ENCODE measurements at regions of chr10 and their contacts with region 1.

Region 1: DNA sequence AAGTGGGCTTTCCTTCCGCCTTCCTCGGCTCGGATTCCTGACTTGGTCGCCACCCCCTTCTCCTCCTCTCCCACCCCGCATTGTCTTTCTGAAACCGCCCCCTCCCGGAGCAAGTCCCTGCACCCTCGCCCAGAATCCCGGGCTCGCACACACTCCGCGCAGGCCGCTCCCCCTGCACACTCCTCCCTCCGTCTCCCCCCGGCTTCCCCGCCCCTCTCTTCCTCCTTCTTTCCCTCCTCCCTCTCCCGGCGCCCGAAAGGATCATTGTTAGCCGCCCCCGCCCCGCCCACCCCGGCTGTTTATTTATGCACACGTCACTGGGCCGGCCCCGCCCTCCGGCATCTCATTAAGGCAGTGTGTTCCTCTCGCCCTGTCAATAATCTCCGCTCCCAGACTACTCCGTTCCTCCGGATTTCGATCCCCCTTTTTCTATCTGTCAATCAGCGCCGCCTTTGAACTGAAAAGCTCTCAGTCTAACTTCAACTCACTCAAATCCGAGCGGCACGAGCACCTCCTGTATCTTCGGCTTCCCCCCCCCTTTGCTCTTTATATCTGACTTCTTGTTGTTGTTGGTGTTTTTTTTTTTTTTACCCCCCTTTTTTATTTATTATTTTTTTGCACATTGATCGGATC is at the start of gene TCF7L2:
- DNase-seq: peak; percentile 94 to 98
- ATAC-seq: peak; percentile 89 to 96 (median 95)
- H3K4me3 ChIP-seq: peak within 1 kb of the TSS; percentile 62 to 90 (median 80)
- H3K27ac ChIP-seq: peak within 1 kb of the TSS; percentile 84 to 97 (median 90)
- H3K4me1 ChIP-seq: peaks cover 4 to 44% (median 18%) of the 10 kb centered on the region in 9 donors
- H3K27me3 ChIP-seq: peaks cover 0 to 22% (median 0%) of the 10 kb centered on the region in 7 donors
- CTCF ChIP-seq: no peak
- total RNA-seq, gene TCF7L2: 9.9 to 15.8 (median 12.0) TPM

Region 2: GRCh38 chr10:112471878-112472487 is 478.0 kb before region 1 on chr10:
- intact Hi-C with region 1: loop called in 1 of 10 experiments (anchors 5 kb)
- DNase-seq: no peak
- ATAC-seq: peak in 6 of 8 donors; percentile 56 to 73 (median 61)
- H3K4me3 ChIP-seq: no peak overlapping the region
- H3K27ac ChIP-seq: no peak overlapping the region
- H3K4me1 ChIP-seq: peaks cover 0 to 8% (median 0%) of the 10 kb centered on the region in 9 donors
- H3K27me3 ChIP-seq: no peaks in the 10 kb centered on the region
- CTCF ChIP-seq: peak; percentile 55 to 81 (median 76)

Region 3: DNA sequence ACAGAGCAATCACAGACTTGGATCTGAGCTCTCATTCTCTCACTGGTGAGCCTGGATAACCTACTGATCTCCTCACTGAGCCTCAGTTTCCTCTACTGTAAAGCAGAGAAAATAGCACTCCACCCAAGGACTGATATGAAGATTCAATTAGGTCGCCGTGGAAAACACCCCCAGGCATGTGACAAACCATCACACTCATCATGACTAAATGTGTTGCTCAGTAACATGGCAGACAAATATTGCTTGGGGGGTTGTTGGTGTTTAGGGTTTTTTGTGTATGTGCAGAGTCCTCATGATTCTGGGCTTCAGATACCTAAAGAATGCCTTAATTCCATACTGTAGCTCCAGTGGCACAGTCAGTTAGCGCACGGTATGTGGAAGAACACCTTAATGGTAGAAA is 122.0 kb before region 1 on chr10:
- intact Hi-C with region 1: no loop called
- DNase-seq: no peak
- ATAC-seq: no peak
- H3K4me3 ChIP-seq: no peak overlapping the region
- H3K27ac ChIP-seq: no peak overlapping the region
- H3K4me1 ChIP-seq: no peaks in the 10 kb centered on the region
- H3K27me3 ChIP-seq: no peaks in the 10 kb centered on the region
- CTCF ChIP-seq: no peak

Region 4: DNA sequence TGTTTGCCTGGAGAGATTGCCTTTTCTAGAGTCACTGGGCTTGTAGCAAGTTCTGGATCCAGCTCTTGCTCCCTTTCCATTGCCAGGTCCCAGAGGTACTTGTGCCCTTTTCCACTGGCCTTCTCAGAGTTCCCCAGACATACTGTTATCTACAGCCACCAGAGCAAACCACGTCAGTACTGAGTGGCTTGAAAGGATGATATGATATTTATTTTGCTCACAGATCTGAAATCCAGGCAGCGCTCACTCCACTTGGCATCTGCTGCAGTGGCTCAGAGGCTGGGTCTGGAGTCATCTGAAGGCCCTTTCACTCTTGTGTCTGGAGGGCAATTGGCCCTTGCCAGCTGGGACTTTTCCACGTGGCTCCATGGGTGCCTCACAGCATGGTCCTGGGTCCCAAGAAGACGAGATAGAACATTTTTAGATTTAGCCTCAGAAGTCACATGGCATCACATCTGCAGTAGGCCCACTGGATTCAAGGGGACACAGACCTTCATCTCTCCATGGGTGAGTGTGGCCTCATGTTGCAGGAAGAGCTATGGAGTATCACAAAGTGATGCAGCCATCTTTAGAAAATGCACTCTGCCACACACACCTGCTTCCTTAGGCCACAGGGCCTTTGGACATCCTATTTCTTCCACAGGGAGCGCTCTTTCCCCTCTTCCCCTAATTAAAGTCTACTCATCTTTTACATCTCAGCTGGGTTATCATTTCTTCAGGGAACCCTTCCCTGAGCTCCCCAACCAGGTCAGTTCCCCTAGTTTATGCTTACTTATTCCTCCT is 22.9 kb before region 1 on chr10:
- intact Hi-C with region 1: no loop called
- DNase-seq: no peak
- ATAC-seq: peak in 4 of 8 donors; percentile 18 to 88 (median 76)
- H3K4me3 ChIP-seq: no peak overlapping the region
- H3K27ac ChIP-seq: no peak overlapping the region
- H3K4me1 ChIP-seq: no peaks in the 10 kb centered on the region
- H3K27me3 ChIP-seq: no peaks in the 10 kb centered on the region
- CTCF ChIP-seq: no peak

Region 5: GRCh38 chr10:112981553-112981952 is 31.6 kb after region 1 on chr10:
- intact Hi-C with region 1: no loop called
- DNase-seq: no peak
- ATAC-seq: no peak
- H3K4me3 ChIP-seq: no peak overlapping the region
- H3K27ac ChIP-seq: no peak overlapping the region
- H3K4me1 ChIP-seq: peaks cover 2 to 35% (median 23%) of the 10 kb centered on the region in 9 donors
- H3K27me3 ChIP-seq: no peaks in the 10 kb centered on the region
- CTCF ChIP-seq: no peak

Region 6: DNA sequence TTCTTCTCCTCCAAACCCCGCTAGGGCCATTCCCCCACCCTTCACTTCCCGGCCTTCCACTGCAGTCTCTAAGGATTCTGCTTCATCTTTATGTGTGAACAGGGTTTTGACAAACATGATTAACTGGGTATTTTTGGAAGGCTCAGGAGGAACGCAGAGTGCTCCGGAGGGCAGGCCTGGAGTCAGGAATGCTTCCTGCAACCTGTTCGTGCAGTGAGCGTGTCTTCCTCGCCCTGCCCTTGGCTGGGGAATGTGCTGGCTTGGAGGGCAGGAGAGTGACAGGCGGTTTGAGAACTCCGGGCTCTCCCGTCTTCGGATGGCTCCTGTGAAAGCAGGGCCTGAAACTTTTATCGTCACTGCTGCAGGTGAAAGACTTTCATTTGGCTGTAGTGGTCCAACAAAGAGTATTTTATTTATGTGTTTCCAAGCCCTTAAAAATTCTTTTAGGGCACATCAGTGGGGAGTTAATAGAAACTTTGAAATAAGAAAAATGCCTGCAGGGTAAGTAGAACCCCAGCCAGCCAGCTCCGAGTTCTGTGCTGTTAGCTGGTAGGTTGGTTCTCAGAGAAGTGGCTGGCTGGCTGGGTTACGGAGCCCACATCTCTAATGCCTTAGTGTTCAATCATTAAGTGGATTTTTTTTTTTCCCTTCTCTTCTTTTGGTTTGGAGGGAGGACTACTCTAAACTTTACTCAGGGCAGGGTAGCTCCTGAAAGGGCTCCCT is 51.0 kb after region 1 on chr10:
- intact Hi-C with region 1: loop called in 2 of 10 experiments (anchors 5 kb)
- DNase-seq: peak in 1 of 2 donors; percentile 35
- ATAC-seq: peak in 7 of 8 donors; percentile 62 to 89 (median 80)
- H3K4me3 ChIP-seq: no peak overlapping the region
- H3K27ac ChIP-seq: peak overlapping the region in 7 of 10 donors; percentile 8 to 58 (median 39)
- H3K4me1 ChIP-seq: peaks cover 9 to 81% (median 37%) of the 10 kb centered on the region in 9 donors
- H3K27me3 ChIP-seq: no peaks in the 10 kb centered on the region
- CTCF ChIP-seq: peak in 4 of 9 donors; percentile 18 to 33 (median 27)

Region 7: DNA sequence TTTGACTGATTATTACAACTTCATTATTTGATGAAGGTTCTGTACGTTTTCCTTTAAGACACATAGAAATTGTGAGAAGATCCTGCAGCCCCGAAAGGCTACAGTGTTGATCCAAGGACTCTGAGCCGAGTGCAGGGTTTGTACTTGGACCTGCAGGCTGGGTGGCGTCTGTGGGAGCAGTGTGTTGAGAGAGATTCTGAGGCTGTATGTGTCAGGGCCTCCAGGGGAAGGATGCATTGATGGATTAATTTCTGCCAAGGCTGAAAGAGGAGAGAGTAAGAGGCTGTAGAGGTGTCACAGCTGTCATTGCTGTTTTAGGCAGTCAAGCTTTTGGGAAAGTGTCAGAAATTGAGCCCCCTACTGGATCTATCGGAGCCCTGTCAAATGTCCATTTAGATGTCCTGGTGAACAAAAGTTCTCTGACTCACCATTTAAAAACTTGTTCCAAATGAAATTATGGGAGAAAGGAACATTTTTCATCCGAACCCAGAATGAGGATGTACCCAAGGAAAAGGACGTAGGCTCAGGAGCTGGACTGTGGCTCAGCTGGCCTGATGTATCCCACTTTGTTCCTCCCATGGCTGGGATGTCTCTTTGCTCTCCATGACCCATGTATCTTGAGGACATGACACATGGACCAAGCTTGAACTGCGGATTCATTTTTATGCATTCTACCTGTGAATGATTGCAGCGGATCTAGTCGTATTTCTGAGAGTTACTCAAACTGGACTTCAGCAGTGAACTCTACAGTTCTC is 102.3 kb after region 1 on chr10:
- intact Hi-C with region 1: loop called in 4 of 10 experiments (anchors 5 to 10 kb)
- DNase-seq: no peak
- ATAC-seq: peak in 4 of 8 donors; percentile 2 to 41 (median 26)
- H3K4me3 ChIP-seq: no peak overlapping the region
- H3K27ac ChIP-seq: peak overlapping the region in 1 of 10 donors; percentile 1
- H3K4me1 ChIP-seq: peaks cover 0 to 78% (median 45%) of the 10 kb centered on the region in 9 donors
- H3K27me3 ChIP-seq: no peaks in the 10 kb centered on the region
- CTCF ChIP-seq: peak in 8 of 9 donors; percentile 14 to 46 (median 26)

Region 8: DNA sequence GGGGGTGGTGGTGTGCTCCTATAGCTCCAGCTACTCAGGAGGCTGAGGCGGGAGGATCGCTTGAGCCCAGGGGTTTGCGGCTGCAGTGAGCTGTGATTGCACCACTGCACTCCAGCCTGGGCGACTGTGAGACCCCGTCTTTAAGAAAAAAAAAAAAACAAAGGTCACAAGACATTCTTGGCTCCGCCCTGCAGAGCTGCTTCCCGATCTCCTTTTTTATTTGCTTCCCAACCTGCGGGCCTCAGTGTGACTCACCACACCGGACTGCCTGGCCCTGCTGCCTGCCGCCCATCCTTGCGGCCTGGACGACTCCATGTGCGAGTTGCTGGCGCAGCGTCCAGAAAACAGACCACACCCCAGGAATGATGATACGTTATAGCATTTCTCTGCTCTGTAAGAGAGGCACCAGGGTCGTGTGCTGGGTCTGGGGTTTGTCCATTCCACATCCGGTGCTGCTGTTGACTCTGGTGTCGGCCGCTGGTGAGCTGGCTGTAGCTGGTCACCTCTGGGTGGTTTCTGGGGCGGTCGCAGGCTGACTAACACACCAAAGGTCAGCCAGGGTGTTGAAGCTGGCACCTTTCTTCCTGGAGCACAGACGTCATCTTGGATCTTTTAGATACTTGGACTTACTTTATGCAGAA is 123.7 kb after region 1 on chr10:
- intact Hi-C with region 1: loop called in 3 of 10 experiments (anchors 5 to 10 kb)
- DNase-seq: peak; percentile 40 to 54
- ATAC-seq: peak; percentile 31 to 88 (median 66)
- H3K4me3 ChIP-seq: no peak overlapping the region
- H3K27ac ChIP-seq: peak overlapping the region in 9 of 10 donors; percentile 12 to 58 (median 42)
- H3K4me1 ChIP-seq: peaks cover 5 to 43% (median 32%) of the 10 kb centered on the region in 9 donors
- H3K27me3 ChIP-seq: no peaks in the 10 kb centered on the region
- CTCF ChIP-seq: no peak

Region 9: GRCh38 chr10:113385021-113385999 is 435.3 kb after region 1 on chr10:
- intact Hi-C with region 1: loop called in 4 of 10 experiments (anchors 10 kb)
- DNase-seq: peak; percentile 78 to 87
- ATAC-seq: peak; percentile 95 to 98 (median 97)
- H3K4me3 ChIP-seq: peak overlapping the region in 1 of 10 donors; percentile 29
- H3K27ac ChIP-seq: peak overlapping the region in 6 of 10 donors; percentile 5 to 61 (median 26)
- H3K4me1 ChIP-seq: peaks cover 0 to 38% (median 24%) of the 10 kb centered on the region in 9 donors
- H3K27me3 ChIP-seq: peaks cover 0 to 6% (median 0%) of the 10 kb centered on the region in 7 donors
- CTCF ChIP-seq: peak; percentile 61 to 94 (median 86)

Measured in heart right ventricle (tissue), 16 donors.